Activated CD4-positive, alpha-beta T cell treated with anti-CD3 and anti-CD28 coated beads for 36 hours (primary cell): ENCODE measurements at regions of chr11 and their contacts with region 1.

Region 1: DNA sequence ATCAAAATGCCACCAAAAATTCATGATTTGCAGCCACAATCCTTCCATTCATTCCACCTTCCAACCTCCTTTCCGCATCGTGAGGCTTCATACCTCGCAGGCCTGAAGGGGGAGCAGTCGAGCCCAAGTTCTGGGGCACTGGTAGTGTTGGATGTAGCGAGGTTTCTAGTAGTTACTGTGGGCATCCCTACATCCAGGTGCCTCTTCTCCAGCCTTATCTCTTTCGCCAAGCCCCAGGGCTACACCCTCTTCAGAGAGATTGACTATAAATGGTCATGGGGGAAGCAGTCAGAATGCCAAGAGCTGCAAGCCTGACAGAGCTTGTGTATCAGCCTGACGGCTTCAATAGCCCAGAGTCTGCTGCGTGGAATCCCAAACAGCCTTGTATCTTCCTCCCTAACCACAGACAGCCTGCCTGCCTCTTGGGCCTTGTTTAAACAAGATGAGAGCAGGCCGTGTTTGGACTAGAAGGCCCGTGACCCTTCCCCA is 28.9 kb downstream of the CLMP start:
- DNase-seq: peak; percentile 54
- ATAC-seq: peak; percentile 39
- H3K4me3 Mint-ChIP-seq: no peak overlapping the region
- H3K27ac Mint-ChIP-seq: no peak overlapping the region
- H3K4me1 Mint-ChIP-seq: no peaks in the 10 kb centered on the region
- H3K27me3 Mint-ChIP-seq: peaks cover 1% of the 10 kb centered on the region

Region 2: GRCh38 chr11:123233280-123233974 is 67.3 kb after region 1 on chr11:
- CTCF ChIA-PET with region 1: no interaction called
- POLR2A ChIA-PET with region 1: no interaction called
- intact Hi-C with region 1: loop called in 1 of 2 experiments (anchors 5 kb)
- DNase-seq: no peak
- ATAC-seq: peak; percentile 80
- H3K4me3 Mint-ChIP-seq: no peak overlapping the region
- H3K27ac Mint-ChIP-seq: peak overlapping the region; percentile 59
- H3K4me1 Mint-ChIP-seq: peaks cover 18% of the 10 kb centered on the region
- H3K27me3 Mint-ChIP-seq: no peaks in the 10 kb centered on the region